ENCODE measurements at regions of chr10 and their contacts with region 1.

Region 1: GRCh38 chr10:7275761-7276440 is 134.9 kb downstream of the SFMBT2 start:
- DNase-seq: no peak
- ATAC-seq: no peak
- H3K4me3 ChIP-seq: no peak overlapping the region
- H3K4me3 Mint-ChIP-seq: no peak overlapping the region
- H3K27ac ChIP-seq: no peak overlapping the region
- H3K27ac Mint-ChIP-seq: peak overlapping the region; percentile 15 to 86 (median 65)
- H3K4me1 ChIP-seq: peaks cover 11 to 30% of the 10 kb centered on the region in 2 donors
- H3K4me1 Mint-ChIP-seq: peaks cover 46 to 92% (median 85%) of the 10 kb centered on the region in 7 donors
- H3K27me3 ChIP-seq: no peaks in the 10 kb centered on the region
- H3K27me3 Mint-ChIP-seq: no peaks in the 10 kb centered on the region

Region 2: DNA sequence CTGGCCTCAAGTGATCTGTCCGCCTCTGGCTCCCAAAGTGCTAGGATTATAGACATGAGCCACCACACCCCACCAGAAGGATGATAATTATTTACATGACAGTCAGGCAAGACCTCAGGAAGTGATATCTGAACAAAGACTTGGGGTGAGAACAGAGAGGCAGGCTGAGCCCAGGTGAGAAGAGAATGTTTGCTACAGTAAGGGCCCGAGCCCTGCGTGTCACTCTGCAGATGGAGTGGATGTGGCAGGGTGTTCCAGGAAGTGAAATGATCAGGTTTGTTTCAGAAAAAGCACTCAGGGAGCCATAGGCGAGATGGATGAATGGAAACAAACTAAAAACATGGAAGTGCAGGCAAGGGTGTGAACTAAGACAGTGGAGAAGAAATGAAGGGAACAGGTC is 112.7 kb after region 1 on chr10:
- CTCF ChIA-PET with region 1: no interaction called
- POLR2A ChIA-PET with region 1: interaction called, 4 read pairs
- intact Hi-C with region 1: loop called in 1 of 2 experiments (anchors 5 kb)
- DNase-seq: peak in 7 of 9 donors; percentile 29 to 60 (median 41)
- ATAC-seq: peak; percentile 70
- H3K4me3 ChIP-seq: peak overlapping the region; percentile 6
- H3K4me3 Mint-ChIP-seq: peak overlapping the region; percentile 70 to 90 (median 80)
- H3K27ac ChIP-seq: peak overlapping the region; percentile 47
- H3K27ac Mint-ChIP-seq: peak overlapping the region; percentile 84 to 96 (median 91)
- H3K4me1 ChIP-seq: peaks cover 20 to 36% of the 10 kb centered on the region in 2 donors
- H3K4me1 Mint-ChIP-seq: peaks cover 46 to 94% (median 83%) of the 10 kb centered on the region in 7 donors
- H3K27me3 ChIP-seq: no peaks in the 10 kb centered on the region
- H3K27me3 Mint-ChIP-seq: no peaks in the 10 kb centered on the region

Measured in naive thymus-derived CD4-positive, alpha-beta T cell (primary cell).